IMR-90 (cell line): ENCODE measurements at regions of chr5 and their contacts with region 1.

Region 1: DNA sequence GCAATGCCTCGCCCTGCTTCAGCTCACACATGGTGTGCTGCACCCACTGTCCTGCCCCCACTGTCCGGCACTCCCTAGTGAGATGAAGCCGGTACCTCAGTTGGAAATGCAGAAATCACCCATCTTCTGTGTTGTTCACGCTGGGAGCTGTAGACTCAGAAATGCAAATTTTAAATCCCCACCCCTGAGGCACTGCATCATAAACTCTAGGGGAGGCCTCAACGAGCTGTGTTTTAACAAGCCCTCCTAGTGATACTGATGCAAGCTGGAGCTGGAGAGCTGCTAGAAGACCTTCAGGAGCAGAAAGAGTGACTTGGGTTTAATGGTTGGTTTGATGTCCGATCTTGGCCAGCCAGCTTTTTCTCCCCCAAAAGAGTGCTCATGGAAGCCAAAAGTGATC is 146.0 kb upstream of the MAST4 start:
- DNase-seq: no peak
- ATAC-seq: no peak
- H3K4me3 ChIP-seq: no peak overlapping the region
- H3K27ac ChIP-seq: no peak overlapping the region
- H3K4me1 ChIP-seq: no peaks in the 10 kb centered on the region
- H3K27me3 ChIP-seq: no peaks in the 10 kb centered on the region
- CTCF ChIP-seq: no peak
- POLR2A ChIP-seq: no peak
- RAD21 ChIP-seq: no peak

Region 2: DNA sequence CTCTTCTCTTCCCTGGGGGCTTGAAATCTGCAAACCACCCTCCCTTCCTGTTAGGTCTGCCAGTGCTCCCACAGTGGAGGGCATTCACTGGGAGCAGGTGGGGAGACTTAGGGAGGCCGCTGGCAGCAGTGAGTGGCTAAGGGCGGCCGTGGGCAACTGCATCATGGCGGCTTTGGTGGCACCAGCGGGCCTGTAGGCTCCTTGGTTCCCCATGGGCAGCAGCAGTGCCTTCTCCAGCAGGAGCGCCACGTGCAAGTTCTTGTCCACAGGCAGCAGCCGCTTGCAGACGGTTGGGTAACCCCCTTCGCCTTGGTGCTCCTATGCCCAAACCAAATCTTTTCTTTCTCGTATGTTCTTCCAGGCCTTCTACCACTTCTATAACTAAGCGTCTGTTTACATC is 147.9 kb before region 1 on chr5:
- CTCF ChIA-PET with region 1: no interaction called
- POLR2A ChIA-PET with region 1: no interaction called
- dilution Hi-C with region 1: no loop called
- in situ Hi-C with region 1: no loop called
- intact Hi-C with region 1: no loop called
- DNase-seq: no peak
- ATAC-seq: no peak
- H3K4me3 ChIP-seq: no peak overlapping the region
- H3K27ac ChIP-seq: no peak overlapping the region
- H3K4me1 ChIP-seq: no peaks in the 10 kb centered on the region
- H3K27me3 ChIP-seq: peaks cover 5% of the 10 kb centered on the region
- CTCF ChIP-seq: no peak
- POLR2A ChIP-seq: no peak
- RAD21 ChIP-seq: no peak

Region 3: DNA sequence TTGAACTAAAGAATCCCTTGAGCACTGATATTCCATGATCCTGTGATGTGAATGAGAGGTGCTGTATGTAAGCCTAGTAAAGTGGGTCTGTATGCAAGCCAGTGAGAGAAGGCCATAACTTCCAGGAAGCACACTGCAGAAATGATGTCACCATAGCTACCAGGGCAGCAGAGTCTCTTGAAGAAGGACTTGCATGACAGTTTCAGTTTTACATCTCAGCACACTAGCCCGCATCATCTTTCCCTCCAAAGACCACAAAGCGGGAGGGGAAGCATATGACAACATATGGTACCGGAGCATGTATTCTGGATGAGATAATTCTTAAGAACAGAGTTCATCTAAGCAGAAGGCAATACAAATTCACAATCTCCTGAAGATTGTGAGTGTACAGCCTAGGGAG is 108.3 kb after region 1 on chr5:
- CTCF ChIA-PET with region 1: no interaction called
- POLR2A ChIA-PET with region 1: no interaction called
- dilution Hi-C with region 1: no loop called
- in situ Hi-C with region 1: no loop called
- intact Hi-C with region 1: no loop called
- DNase-seq: no peak
- ATAC-seq: no peak
- H3K4me3 ChIP-seq: no peak overlapping the region
- H3K27ac ChIP-seq: no peak overlapping the region
- H3K4me1 ChIP-seq: no peaks in the 10 kb centered on the region
- H3K27me3 ChIP-seq: no peaks in the 10 kb centered on the region
- CTCF ChIP-seq: no peak
- POLR2A ChIP-seq: no peak
- RAD21 ChIP-seq: no peak

Region 4: GRCh38 chr5:68369457-68370125 is 1919.4 kb after region 1 on chr5:
- CTCF ChIA-PET with region 1: no interaction called
- POLR2A ChIA-PET with region 1: interaction called, 11 read pairs
- dilution Hi-C with region 1: no loop called
- in situ Hi-C with region 1: no loop called
- intact Hi-C with region 1: no loop called
- DNase-seq: no peak
- ATAC-seq: no peak
- H3K4me3 ChIP-seq: no peak overlapping the region
- H3K27ac ChIP-seq: no peak overlapping the region
- H3K4me1 ChIP-seq: no peaks in the 10 kb centered on the region; the same call in 1 of the 2 replicates
- H3K27me3 ChIP-seq: no peaks in the 10 kb centered on the region; the same call in 1 of the 2 replicates
- CTCF ChIP-seq: no peak
- POLR2A ChIP-seq: no peak
- RAD21 ChIP-seq: no peak